ENCODE measurements at regions of chr2 and their contacts with region 1.

Region 1: GRCh38 chr2:28821295-28821958 is 10.8 kb downstream of the SPDYA start:
- DNase-seq: peak; percentile 92
- H3K4me3 Mint-ChIP-seq: no peak overlapping the region
- H3K27ac Mint-ChIP-seq: no peak overlapping the region
- H3K4me1 Mint-ChIP-seq: peaks cover 5% of the 10 kb centered on the region
- H3K27me3 Mint-ChIP-seq: peaks cover 5% of the 10 kb centered on the region

Region 2: DNA sequence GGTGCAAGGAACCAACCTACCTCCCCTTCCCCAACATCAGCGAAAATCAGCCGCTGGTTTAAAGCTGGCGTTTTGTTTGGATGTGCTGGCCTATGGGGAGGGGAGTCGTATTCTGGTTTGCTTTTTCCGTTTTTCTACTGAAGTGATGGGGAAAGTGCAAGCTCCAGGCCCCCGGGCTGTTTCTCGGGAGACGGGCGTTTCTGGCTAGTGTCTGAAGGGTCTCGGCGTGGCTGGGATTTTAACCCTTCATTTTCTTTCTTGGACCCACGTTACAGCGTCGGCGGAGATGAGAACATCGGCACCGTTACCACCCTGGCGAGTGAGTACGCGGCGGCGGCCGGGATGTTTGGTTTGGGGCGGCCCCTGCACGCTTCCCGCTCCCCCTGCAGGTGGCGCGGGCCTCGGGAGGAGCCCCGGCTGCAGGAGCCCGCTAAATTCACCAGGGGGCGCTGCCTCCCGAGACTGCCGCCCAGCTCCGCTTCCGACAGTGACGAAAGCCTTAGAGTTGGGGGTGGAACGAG is 254.8 kb before region 1 on chr2:
- intact Hi-C with region 1: loop called (anchors 2 kb)
- DNase-seq: peak; percentile 97
- H3K4me3 Mint-ChIP-seq: peak overlapping the region; percentile 86
- H3K27ac Mint-ChIP-seq: peak overlapping the region; percentile 72
- H3K4me1 Mint-ChIP-seq: peaks cover 17% of the 10 kb centered on the region
- H3K27me3 Mint-ChIP-seq: peaks cover 7% of the 10 kb centered on the region

Region 3: DNA sequence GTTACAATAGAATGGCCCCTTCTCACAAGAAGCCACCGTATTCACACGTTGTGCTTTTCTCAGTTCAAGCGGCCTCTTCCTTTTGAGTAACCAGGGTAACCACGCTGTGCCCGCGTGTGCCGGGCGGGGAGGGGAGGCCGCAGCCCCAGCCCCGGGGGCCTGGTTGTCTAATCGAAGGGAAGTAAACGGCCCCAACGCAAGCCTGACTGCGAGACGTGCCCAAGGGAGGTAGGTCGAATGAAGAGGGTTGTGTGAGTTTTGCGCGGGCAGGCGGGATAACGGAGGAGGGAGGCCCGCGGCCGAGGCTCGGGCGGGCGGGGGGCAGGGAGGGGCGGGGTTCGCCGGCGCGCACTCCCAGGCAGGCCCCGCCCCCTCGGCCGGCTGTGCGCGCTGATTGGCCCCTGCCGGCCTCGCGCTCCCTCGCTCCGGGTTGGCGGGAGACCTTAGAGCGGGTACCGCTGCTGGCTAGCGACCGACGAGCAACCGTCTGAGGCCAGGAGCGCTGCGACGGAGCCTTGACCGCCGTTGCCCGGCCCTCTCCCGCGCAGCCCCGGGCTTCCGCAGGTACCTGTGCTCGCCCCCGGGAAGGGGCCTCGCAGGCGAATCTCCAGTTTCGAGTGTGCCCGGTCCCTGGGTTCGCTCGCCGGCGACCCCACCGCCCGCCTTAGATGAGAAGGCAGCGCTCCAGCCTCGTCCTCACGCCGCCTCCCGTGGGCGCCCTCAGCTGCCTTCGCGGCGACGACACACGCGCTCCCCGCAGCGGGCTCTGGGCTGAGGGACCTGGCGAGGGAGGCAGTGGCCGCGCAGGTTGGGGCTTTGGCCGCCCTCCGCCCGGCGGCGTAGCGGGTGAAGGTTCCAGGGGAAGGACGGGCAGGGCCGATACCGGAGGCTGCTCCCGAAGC is 10.8 kb before region 1 on chr2 and contains the start of gene SPDYA:
- intact Hi-C with region 1: loop called (anchors 1 kb)
- DNase-seq: peak; percentile 94
- H3K4me3 Mint-ChIP-seq: peak within 1 kb of the TSS; percentile 86
- H3K27ac Mint-ChIP-seq: peak within 1 kb of the TSS; percentile 80
- H3K4me1 Mint-ChIP-seq: peaks cover 10% of the 10 kb centered on the region
- H3K27me3 Mint-ChIP-seq: peaks cover 4% of the 10 kb centered on the region
- total RNA-seq, gene SPDYA: 1.9 TPM in 2 replicates

Region 4: GRCh38 chr2:28894470-28895177 is 73.2 kb after region 1 on chr2 and contains the start of gene WDR43:
- intact Hi-C with region 1: loop called (anchors 5 kb)
- DNase-seq: peak; percentile 100
- H3K4me3 Mint-ChIP-seq: peak within 1 kb of the TSS; percentile 99
- H3K27ac Mint-ChIP-seq: peak within 1 kb of the TSS; percentile 95
- H3K4me1 Mint-ChIP-seq: peaks cover 32% of the 10 kb centered on the region
- H3K27me3 Mint-ChIP-seq: no peaks in the 10 kb centered on the region
- total RNA-seq, gene WDR43: 181 and 190 TPM in 2 replicates

Region 5: DNA sequence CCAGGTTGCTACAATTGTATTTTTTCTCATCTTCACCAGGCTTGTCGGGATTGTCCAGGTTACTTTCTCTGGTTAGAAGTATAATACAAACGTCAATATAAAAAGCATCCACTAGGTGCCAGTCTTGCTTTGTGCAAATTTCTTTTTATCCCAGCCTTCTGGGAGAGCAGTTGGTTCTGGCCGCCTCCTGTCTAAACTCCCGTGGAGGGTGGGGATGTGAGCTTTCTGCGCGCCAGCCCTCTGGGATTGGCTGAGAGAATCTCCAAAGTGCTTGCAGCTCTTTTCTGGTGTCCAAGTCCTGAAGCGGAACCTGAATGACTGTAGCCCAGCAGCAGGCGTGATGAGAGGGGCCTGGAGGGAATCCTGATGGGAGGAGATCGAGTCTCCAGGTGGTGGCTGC is 137.3 kb after region 1 on chr2:
- intact Hi-C with region 1: loop called (anchors 2 kb)
- DNase-seq: peak; percentile 86
- H3K4me3 Mint-ChIP-seq: no peak overlapping the region
- H3K27ac Mint-ChIP-seq: no peak overlapping the region
- H3K4me1 Mint-ChIP-seq: peaks cover 12% of the 10 kb centered on the region
- H3K27me3 Mint-ChIP-seq: peaks cover 7% of the 10 kb centered on the region

Region 6: GRCh38 chr2:29196792-29197788 is 375.7 kb after region 1 on chr2:
- intact Hi-C with region 1: loop called (anchors 5 kb)
- DNase-seq: peak; percentile 94
- H3K4me3 Mint-ChIP-seq: no peak overlapping the region
- H3K27ac Mint-ChIP-seq: no peak overlapping the region
- H3K4me1 Mint-ChIP-seq: no peaks in the 10 kb centered on the region
- H3K27me3 Mint-ChIP-seq: no peaks in the 10 kb centered on the region

Region 7: DNA sequence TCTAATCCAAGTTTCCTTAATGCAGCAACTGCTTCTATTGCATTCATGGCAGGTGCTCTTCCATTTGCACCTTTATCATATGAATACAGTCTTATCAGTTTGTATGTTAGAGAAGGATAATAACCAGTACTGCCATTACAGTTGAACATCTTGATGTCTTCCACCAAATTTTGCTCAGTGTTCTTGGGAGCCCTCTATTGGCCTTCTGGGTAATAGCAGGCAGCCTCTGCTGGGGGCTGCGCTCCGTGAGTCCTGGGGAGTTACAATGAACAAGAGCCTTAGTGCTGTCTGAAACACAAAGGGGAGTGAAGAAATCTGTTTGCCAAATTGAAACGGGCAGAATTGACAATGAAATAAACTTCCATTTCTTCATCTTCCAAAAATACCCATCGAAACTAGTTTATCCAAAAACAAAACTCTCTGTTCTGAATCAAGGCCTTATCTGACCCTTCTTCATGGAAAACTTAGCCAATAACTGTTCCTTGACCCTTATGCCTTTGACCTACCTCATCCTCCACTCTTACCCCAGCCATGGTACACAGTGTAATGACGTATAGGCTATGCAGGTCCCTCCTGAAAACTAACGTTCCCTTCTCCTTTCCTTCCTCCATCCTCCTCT is 1020.1 kb after region 1 on chr2:
- intact Hi-C with region 1: loop called (anchors 5 kb)
- DNase-seq: peak; percentile 74
- H3K4me3 Mint-ChIP-seq: no peak overlapping the region
- H3K27ac Mint-ChIP-seq: no peak overlapping the region
- H3K4me1 Mint-ChIP-seq: no peaks in the 10 kb centered on the region
- H3K27me3 Mint-ChIP-seq: peaks cover 7% of the 10 kb centered on the region